ENCODE measurements at regions of chr3 and their contacts with region 1.

Region 1: DNA sequence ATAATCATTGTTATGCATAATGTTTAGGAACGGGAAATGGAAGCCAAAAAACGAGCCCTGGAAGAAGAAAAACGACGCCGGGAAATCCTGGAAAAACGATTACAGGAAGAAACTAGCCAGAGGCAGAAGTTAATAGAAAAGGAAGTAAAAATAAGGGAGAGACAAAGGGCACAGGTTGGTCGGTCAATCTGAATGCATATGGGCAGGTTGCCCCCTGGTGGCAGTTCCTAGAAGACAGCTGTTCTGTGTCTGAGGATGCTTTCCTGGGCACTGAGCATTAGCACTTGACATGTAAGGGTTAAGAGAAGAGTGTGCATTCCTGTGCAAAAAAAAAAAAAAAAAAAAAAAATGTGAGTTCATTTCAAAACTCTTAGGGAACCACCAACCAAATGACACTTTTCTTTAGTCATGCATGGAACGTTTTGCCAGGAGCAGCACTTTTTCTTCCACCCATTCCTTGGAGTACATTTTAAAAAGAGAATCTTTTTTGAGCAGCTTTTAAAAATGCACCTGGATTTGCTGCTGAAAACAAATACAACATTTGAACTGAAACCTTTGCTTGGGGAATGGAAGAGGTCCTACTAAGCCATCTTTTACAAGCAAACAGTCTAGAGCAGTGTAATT is 11.1 kb upstream of the ABHD10 start:
- DNase-seq: peak; percentile 46
- H3K4me3 ChIP-seq: peak overlapping the region in 1 of 2 experiments; percentile 10; a peak in 1 of 4 replicates
- H3K27ac ChIP-seq: peak overlapping the region in 1 of 2 experiments; percentile 50; a peak in 1 of 4 replicates
- H3K4me1 ChIP-seq: peaks cover 2 to 7% of the 10 kb centered on the region in 2 experiments; a peak in 2 of 4 replicates
- H3K27me3 ChIP-seq: no peaks in the 10 kb centered on the region
- CTCF ChIP-seq: peak; percentile 87
- EP300 ChIP-seq: no peak
- RAD21 ChIP-seq: peak; percentile 93

Region 2: GRCh38 chr3:111691293-111691909 is 276.4 kb before region 1 on chr3:
- CTCF ChIA-PET with region 1: interaction called, 28 read pairs
- POLR2A ChIA-PET with region 1: no interaction called
- DNase-seq: peak; percentile 47
- H3K4me3 ChIP-seq: no peak overlapping the region; a peak in 1 of 4 replicates
- H3K27ac ChIP-seq: peak overlapping the region in 1 of 2 experiments; percentile 75; a peak in 2 of 4 replicates
- H3K4me1 ChIP-seq: peaks cover 3 to 37% of the 10 kb centered on the region in 2 experiments
- H3K27me3 ChIP-seq: no peaks in the 10 kb centered on the region
- CTCF ChIP-seq: peak; percentile 74
- EP300 ChIP-seq: no peak
- RAD21 ChIP-seq: peak; percentile 74

Region 3: DNA sequence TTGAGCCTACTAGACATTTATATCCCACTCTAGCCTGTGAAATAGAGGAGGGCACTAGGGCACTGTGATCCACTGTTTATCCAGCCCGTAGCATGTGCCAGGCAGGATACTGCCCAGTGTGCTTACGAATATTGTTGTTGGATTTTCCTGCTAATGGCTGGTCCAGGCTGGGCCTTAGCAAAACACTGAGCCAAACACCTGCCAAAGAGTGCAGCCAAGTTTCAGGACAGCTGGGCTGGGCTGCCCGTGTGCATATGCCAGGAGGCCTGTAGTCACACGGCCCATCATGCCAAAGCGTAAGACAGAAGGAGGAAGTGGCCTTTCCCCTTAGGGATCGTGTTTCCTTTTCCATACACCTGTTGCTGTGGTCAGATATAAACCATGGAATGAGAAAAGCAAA is 43.5 kb before region 1 on chr3:
- CTCF ChIA-PET with region 1: no interaction called
- POLR2A ChIA-PET with region 1: no interaction called
- DNase-seq: no peak
- H3K4me3 ChIP-seq: no peak overlapping the region
- H3K27ac ChIP-seq: no peak overlapping the region
- H3K4me1 ChIP-seq: peaks cover 0 to 14% of the 10 kb centered on the region in 2 experiments; a peak in 1 of 4 replicates
- H3K27me3 ChIP-seq: no peaks in the 10 kb centered on the region
- CTCF ChIP-seq: no peak
- EP300 ChIP-seq: no peak
- RAD21 ChIP-seq: no peak

Region 4: DNA sequence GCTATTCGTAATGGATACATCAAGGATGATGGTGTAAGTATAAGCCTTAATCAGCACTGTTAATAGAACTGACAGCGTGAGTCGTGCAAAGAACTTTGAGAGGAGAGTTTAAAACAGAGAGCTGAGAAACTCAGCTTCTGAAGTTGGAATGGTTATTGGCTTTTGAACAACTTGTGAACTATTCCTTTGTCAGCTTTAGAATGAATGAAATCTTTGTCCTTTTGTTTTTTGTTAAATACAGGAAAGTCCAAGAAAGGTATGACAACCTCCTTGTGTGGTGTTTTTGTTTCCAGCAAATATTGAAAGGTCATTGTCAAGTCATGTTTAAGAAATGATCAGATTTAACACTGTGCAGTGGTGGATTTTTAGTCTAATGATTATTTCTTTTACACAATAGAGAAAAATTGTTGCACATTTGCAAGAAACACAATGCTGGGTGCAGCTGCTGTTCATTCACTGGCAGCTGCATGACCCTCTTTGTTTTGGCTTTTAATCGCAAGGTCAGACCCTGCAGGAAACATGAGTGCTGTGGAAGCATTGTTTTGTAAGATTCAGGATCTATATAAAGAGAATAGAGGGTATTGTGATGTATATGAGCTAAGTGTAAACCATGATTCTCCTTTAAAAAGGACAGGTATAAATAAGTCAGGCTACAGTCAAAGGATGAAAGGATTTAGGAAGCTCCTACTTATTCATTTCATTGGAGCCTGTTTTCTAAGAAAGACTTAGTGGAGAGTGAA is 10.6 kb before region 1 on chr3:
- CTCF ChIA-PET with region 1: interaction called, 26 read pairs
- POLR2A ChIA-PET with region 1: no interaction called
- DNase-seq: no peak
- H3K4me3 ChIP-seq: no peak overlapping the region
- H3K27ac ChIP-seq: no peak overlapping the region
- H3K4me1 ChIP-seq: peaks cover 9 to 10% of the 10 kb centered on the region in 2 experiments; a peak in 3 of 4 replicates
- H3K27me3 ChIP-seq: no peaks in the 10 kb centered on the region
- CTCF ChIP-seq: no peak
- EP300 ChIP-seq: no peak
- RAD21 ChIP-seq: no peak

Region 5: DNA sequence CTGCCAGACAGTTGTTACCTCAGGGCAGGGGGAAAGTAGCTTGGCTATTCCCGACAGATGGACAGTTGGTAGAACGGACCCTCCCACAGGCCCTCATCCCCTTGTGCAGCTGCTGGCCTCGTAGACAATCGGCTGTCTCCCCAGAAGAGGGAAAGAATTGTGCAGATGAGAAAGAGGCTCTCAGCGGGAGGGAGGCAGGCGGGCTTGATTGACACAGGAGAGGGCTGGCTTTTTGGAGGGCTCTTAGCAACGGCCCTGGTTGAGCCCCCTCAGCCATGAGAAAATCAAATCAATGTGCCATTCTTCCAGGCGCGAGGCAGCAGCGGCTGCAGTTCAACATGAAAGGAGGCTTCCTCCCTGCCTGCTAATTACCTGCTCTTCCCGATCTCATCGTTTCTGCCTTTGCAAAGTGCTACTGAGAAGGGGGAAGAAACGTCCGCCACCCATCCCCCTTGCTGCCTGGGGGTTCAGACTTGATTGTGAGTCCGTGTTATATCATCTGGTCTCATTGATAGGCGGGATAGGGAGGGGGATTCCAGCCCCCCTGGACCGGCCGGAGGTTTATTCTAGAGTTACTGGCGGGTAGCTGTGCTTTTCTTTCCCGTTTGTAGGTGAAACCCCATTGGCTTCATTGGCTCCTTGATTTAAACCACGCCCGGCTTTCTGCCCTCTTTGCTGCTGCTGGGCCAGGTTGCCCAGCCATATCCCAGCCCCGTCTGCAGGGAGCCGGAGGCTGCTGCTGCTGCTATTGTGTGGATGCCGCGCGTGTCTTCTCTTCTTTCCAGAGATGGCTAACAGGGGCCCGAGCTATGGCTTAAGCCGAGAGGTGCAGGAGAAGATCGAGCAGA is 31.1 kb after region 1 on chr3 and contains the start of gene TAGLN3:
- CTCF ChIA-PET with region 1: interaction called, 13 read pairs
- POLR2A ChIA-PET with region 1: no interaction called
- DNase-seq: peak; percentile 70
- H3K4me3 ChIP-seq: peak within 1 kb of the TSS; percentile 61 to 77
- H3K27ac ChIP-seq: peak within 1 kb of the TSS; percentile 29 to 96
- H3K4me1 ChIP-seq: peaks cover 12 to 33% of the 10 kb centered on the region in 2 experiments; a peak in 3 of 4 replicates
- H3K27me3 ChIP-seq: no peaks in the 10 kb centered on the region
- CTCF ChIP-seq: no peak
- EP300 ChIP-seq: no peak
- RAD21 ChIP-seq: no peak
- polyA plus RNA-seq, gene TAGLN3: 19.6 and 24.2 TPM in 2 replicates

Region 6: GRCh38 chr3:112043603-112044201 is 75.9 kb after region 1 on chr3:
- CTCF ChIA-PET with region 1: interaction called, 10 read pairs
- POLR2A ChIA-PET with region 1: no interaction called
- DNase-seq: peak; percentile 69
- H3K4me3 ChIP-seq: peak overlapping the region in 1 of 2 experiments; percentile 54; a peak in 1 of 4 replicates
- H3K27ac ChIP-seq: no peak overlapping the region
- H3K4me1 ChIP-seq: no peaks in the 10 kb centered on the region
- H3K27me3 ChIP-seq: no peaks in the 10 kb centered on the region
- CTCF ChIP-seq: peak; percentile 96
- EP300 ChIP-seq: no peak
- RAD21 ChIP-seq: peak; percentile 89

Measured in SK-N-SH (cell line).